Kidney (tissue), 22 donors: ENCODE measurements at regions of chr6 and their contacts with region 1.

Region 1: DNA sequence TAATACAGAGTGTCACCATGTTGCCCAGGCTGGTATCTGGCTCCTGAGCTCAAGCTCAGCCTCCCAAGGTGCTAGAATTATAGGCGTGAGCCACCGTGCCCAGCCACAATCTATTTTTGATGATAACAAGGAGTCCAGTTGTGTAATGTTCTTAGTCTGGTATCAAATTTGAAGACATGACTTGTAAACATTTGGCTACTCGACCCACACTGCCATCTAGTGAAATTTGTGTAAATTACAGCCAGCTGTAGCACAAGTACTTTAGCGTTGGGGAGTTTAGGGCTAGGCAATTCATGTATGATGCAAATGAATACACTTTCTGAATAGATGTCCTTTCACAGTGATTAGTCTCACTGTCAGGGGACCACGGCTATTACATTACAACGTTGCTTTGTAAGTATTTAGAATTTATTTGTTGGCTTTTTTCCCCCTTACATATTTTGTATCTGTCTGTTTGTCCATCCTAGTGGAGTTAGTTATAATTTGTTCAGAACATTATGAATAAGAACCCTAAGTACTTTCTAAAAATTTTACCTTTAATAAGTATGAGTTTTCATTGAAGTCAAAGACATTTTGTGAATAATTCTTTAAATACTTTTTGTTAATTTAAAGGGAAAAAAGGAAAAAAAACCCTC is 139.7 kb downstream of the PRDM13 start:
- DNase-seq: peak in 4 of 5 donors; percentile 47 to 77 (median 68)
- H3K4me3 ChIP-seq: no peak overlapping the region
- H3K27ac ChIP-seq: no peak overlapping the region
- H3K4me1 ChIP-seq: no peaks in the 10 kb centered on the region
- H3K27me3 ChIP-seq: no peaks in the 10 kb centered on the region
- CTCF ChIP-seq: peak; percentile 86

Region 2: DNA sequence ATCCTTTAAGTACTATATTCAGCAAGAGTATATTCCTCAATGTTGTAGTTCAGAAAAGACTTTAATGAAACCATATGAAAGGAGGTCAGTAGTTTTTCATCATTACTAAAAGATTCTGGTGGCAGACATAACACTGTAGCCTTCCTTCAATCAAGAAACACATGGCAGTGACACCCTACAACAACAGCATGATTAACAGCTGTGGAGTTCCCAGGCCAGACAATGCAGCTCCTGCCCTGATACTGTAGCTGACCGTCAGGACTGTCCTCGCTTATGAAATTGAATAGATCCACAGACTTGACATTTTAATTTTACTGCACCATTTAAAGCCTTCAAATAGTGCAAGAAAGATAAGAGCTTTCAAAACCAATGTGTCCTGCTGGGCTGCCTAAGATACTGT is 274.7 kb before region 1 on chr6:
- intact Hi-C with region 1: loop called (anchors 10 kb)
- DNase-seq: no peak
- H3K4me3 ChIP-seq: no peak overlapping the region
- H3K27ac ChIP-seq: no peak overlapping the region
- H3K4me1 ChIP-seq: no peaks in the 10 kb centered on the region
- H3K27me3 ChIP-seq: no peaks in the 10 kb centered on the region
- CTCF ChIP-seq: no peak

Region 3: GRCh38 chr6:100152201-100152600 is 405.8 kb after region 1 on chr6:
- intact Hi-C with region 1: no loop called
- DNase-seq: no peak
- H3K4me3 ChIP-seq: no peak overlapping the region
- H3K27ac ChIP-seq: no peak overlapping the region
- H3K4me1 ChIP-seq: no peaks in the 10 kb centered on the region
- H3K27me3 ChIP-seq: no peaks in the 10 kb centered on the region
- CTCF ChIP-seq: no peak